Endothelial cell of umbilical vein (primary cell): ENCODE measurements at regions of chr19 and their contacts with region 1.

Region 1: DNA sequence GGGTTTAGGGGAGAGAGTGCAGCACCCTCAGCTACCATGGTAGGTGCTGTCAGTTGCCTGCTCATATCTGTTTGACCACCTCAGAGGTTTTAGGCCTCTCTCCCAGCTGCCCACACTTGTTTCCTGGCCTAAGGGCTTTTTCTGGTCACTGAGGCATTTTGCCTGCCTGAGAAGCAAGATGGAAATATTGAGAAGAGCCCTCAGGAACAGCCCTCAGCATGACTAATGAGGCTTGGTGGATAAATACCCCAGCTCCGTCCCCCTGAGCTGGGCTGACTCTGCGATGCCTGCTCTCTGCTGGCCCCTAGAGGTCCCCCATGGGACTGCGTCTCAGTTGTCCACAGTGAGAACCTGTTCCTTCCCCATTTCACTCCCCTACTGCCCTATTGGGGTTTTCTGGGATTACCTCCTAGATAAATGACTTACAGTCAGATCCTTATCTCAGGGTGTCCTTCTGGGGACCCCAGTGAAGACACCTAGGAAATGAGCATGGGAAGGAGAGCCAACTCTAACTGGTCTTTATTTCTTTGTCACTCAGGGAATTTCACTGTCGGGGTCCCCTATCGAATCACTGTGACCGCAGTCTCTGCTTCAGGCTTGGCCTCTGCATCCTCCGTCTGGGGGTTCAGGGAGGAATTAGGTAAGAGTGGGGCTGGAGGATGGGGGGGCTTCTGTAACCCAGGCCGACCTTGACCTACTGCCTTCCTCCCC is 13.3 kb downstream of the PALM3 start:
- DNase-seq: peak; percentile 35
- H3K4me3 ChIP-seq: no peak overlapping the region
- H3K27ac ChIP-seq: no peak overlapping the region
- H3K4me1 ChIP-seq: no peaks in the 10 kb centered on the region
- H3K27me3 ChIP-seq: no peaks in the 10 kb centered on the region
- CTCF ChIP-seq: peak; percentile 83 to 91
- POLR2A ChIP-seq: no peak

Region 2: GRCh38 chr19:13597640-13598039 is 451.0 kb before region 1 on chr19:
- CTCF ChIA-PET with region 1: no interaction called
- POLR2A ChIA-PET with region 1: no interaction called
- dilution Hi-C with region 1: no loop called
- intact Hi-C with region 1: loop called (anchors 10 kb)
- DNase-seq: peak; percentile 66
- H3K4me3 ChIP-seq: no peak overlapping the region
- H3K27ac ChIP-seq: no peak overlapping the region
- H3K4me1 ChIP-seq: no peaks in the 10 kb centered on the region
- H3K27me3 ChIP-seq: no peaks in the 10 kb centered on the region
- CTCF ChIP-seq: peak; percentile 39 to 61
- POLR2A ChIP-seq: no peak